Activated T-helper 1 cell treated with anti-CD3 and anti-CD28 coated beads, Interleukin-12 subunit alpha, Interleukin-12 subunit beta, Interleukin-2, Interleukin-4 antibody, amounts not matched to agents 30 ng/mL and 10 ng/mL and 1 ng/mL, durations not matched to agents 14 hours and 24 hours and 36 hours (primary cell): ENCODE measurements at regions of chr16 and their contacts with region 1.

Region 1: DNA sequence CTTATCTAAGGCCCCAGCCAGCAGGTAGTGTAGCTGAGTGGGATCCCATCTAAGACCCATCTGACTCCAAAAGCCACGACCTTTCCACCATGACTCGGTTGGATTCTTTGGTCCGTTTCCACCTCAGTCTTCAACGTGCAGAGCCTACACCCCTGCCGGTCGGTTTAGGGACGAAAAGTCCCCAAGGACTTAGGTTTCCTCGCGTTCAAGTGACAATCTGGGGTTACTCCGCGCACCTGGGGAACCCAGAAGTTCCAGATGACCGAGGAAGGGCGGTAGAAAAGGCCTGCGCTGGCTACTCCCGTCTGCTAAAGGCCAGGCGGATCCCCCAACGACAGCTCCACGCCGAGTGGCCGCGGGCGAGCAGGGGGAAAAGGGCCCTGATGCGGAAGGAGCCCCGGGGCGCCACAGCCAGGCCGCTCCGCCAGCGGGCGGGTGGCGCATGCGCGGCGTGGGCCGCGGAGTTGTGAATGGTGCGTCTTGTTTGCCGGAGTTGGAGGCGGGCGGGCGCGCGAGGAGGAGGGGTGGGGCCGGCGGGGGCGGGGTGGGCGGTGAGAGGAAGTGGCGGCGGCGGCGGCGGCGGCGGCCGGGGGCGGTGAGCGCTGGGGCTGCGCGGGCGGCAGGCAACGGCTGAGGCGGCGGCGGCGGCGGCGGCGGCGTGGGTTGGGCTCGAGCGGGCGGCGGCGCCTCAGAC is at the start of gene CBFB:
- DNase-seq: peak; percentile 94
- H3K4me3 Mint-ChIP-seq: peak within 1 kb of the TSS; percentile 93
- H3K27ac Mint-ChIP-seq: peak within 1 kb of the TSS; percentile 94
- H3K4me1 Mint-ChIP-seq: peaks cover 61% of the 10 kb centered on the region
- H3K27me3 Mint-ChIP-seq: no peaks in the 10 kb centered on the region
- total RNA-seq, gene CBFB: 171 and 175 TPM in 2 replicates

Region 2: GRCh38 chr16:67000384-67001351 is 28.0 kb before region 1 on chr16:
- intact Hi-C with region 1: loop called (anchors 1 kb)
- DNase-seq: peak; percentile 55
- H3K4me3 Mint-ChIP-seq: peak overlapping the region; percentile 76
- H3K27ac Mint-ChIP-seq: peak overlapping the region; percentile 88
- H3K4me1 Mint-ChIP-seq: peaks cover 45% of the 10 kb centered on the region
- H3K27me3 Mint-ChIP-seq: no peaks in the 10 kb centered on the region

Region 3: DNA sequence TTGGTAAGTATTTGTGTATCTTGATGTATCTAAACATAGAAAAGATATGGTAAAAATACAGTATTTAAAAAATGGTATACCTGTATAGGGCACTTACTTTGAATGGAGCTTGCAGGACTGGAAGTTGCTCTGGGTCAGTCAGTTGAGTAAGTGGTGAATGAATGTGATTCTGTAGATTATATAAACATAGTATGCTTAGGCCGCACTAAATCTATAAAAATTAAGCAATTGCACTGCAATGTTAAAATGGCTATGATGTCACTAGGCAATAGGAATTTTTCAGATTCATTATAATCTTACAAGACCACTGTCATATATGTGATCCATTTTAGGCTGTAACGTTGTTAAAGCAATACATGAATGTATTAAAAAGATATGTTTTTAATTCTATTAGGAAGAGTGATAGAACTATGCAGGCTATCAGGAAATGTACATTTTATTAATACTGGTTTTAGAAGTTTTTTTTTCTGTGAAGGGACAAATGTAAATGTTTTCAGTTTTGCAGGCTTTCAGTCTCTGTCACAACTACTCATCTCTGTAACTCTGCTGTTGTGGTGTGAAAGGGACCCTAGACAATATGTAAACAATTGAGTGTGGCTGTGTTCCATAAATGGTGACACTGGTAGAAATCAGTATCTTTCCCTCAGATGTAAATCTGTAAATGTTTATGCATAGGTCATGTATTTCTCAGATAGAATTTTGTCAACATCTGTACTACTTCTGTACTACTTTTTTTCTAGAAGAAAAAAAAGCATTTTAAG is 10.7 kb after region 1 on chr16:
- intact Hi-C with region 1: loop called (anchors 1 kb)
- DNase-seq: no peak
- H3K4me3 Mint-ChIP-seq: no peak overlapping the region
- H3K27ac Mint-ChIP-seq: peak overlapping the region; percentile 43
- H3K4me1 Mint-ChIP-seq: peaks cover 60% of the 10 kb centered on the region
- H3K27me3 Mint-ChIP-seq: no peaks in the 10 kb centered on the region

Region 4: GRCh38 chr16:67055712-67056487 is 27.2 kb after region 1 on chr16:
- intact Hi-C with region 1: loop called (anchors 1 kb)
- DNase-seq: no peak
- H3K4me3 Mint-ChIP-seq: peak overlapping the region; percentile 74
- H3K27ac Mint-ChIP-seq: peak overlapping the region; percentile 96
- H3K4me1 Mint-ChIP-seq: peaks cover 51% of the 10 kb centered on the region
- H3K27me3 Mint-ChIP-seq: no peaks in the 10 kb centered on the region

Region 5: DNA sequence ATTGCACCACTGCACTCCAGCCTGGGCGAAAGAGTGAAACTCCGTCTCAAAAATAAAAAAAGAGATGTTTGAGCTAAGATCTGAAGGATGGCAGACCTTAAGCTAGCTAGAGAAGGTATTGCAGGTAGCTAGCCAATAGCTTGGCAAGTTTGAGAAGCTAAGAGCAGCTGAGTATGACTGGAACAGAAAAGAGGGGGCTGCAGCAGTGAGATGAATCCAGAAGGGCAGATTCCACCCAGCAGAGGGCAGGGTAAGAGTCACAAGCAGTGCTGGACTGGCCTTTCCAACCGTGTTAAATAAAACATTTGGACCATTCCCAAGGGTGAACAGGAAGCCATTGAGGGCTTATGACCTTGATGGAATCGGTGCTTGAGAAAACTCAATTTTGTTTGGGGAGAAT is 75.4 kb after region 1 on chr16:
- intact Hi-C with region 1: loop called (anchors 1 kb)
- DNase-seq: no peak
- H3K4me3 Mint-ChIP-seq: no peak overlapping the region
- H3K27ac Mint-ChIP-seq: no peak overlapping the region
- H3K4me1 Mint-ChIP-seq: peaks cover 31% of the 10 kb centered on the region
- H3K27me3 Mint-ChIP-seq: no peaks in the 10 kb centered on the region

Region 6: GRCh38 chr16:67109407-67110135 is 80.9 kb after region 1 on chr16 and contains the start of gene PHAF1:
- intact Hi-C with region 1: loop called (anchors 1 kb)
- DNase-seq: peak; percentile 93
- H3K4me3 Mint-ChIP-seq: peak within 1 kb of the TSS; percentile 96
- H3K27ac Mint-ChIP-seq: peak within 1 kb of the TSS; percentile 87
- H3K4me1 Mint-ChIP-seq: peaks cover 45% of the 10 kb centered on the region
- H3K27me3 Mint-ChIP-seq: no peaks in the 10 kb centered on the region
- total RNA-seq, gene PHAF1: 20.5 and 20.6 TPM in 2 replicates

Region 7: DNA sequence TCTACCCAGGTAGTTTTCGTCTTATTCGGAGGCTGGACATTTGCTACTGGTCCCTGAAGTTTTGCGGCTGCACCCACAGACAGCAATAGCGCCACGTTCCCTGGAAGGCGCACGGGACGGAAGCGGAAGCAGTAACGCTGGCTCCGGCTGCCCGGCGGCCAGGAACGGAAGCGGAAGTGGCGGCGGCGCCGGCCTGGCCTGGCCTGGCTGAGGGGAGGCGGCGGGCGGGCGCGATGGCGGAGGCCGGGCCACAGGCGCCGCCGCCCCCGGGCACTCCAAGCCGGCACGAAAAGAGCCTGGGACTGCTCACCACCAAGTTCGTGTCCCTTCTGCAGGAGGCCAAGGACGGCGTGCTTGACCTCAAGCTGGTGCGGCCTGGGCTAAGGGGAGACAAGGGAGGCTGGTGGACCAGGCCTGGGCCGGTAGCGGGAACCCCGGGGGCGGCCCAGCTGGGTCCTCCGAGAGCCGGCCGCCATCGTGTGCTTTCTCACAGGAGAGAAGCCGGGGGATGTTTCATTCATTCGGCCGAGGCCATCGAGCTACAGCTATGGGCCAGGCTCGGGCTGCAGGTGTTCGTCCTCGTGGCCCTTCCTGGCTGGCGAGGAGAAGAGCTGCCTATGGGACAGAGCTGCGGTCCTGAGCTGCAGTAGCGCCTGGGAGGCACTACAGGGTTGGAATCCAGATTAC is 163.4 kb after region 1 on chr16 and contains the start of gene E2F4:
- intact Hi-C with region 1: loop called (anchors 1 kb)
- DNase-seq: peak; percentile 86
- H3K4me3 Mint-ChIP-seq: peak within 1 kb of the TSS; percentile 95
- H3K27ac Mint-ChIP-seq: peak within 1 kb of the TSS; percentile 86
- H3K4me1 Mint-ChIP-seq: peaks cover 51% of the 10 kb centered on the region
- H3K27me3 Mint-ChIP-seq: no peaks in the 10 kb centered on the region
- total RNA-seq, gene E2F4: 174 and 181 TPM in 2 replicates